ENCODE measurements at regions of chr1 and their contacts with region 1.

Region 1: GRCh38 chr1:167599957-167600581 is 30.0 kb upstream of the RCSD1 start:
- DNase-seq: peak; percentile 56
- ATAC-seq: peak; percentile 75 to 79
- H3K4me3 ChIP-seq: no peak overlapping the region
- H3K27ac ChIP-seq: no peak overlapping the region
- H3K4me1 ChIP-seq: peaks cover 31% of the 10 kb centered on the region
- H3K27me3 ChIP-seq: no peaks in the 10 kb centered on the region
- CTCF ChIP-seq: peak; percentile 57

Region 2: DNA sequence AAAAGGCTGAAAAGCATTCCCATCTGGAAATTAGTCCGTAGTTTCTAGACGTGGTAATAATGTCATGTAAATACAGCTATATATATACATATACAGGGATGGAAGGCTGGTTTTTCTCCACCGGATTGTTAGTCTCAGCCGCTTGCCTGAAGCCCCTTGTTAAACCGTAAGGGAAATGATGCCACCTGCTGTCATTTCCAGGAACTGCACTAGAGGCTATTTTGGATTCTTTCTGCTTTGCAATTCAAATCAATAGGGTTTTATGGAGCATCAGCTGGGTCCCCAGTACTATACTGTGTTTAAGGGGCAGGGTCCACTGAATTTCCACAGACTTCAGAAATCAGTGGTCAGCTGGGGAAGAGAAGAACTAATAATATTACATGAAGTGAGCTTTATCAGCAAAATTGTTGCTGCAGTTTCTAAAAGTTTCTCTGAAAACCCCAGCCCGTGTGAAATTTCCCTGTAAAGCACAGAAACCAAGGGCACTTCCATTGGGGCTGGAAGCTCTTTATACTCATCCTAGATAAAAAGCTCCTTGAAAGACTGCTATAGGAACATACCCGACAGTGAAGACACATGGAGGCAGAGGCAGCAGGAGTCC is 88.0 kb after region 1 on chr1:
- intact Hi-C with region 1: loop called (anchors 10 kb)
- DNase-seq: no peak
- ATAC-seq: peak; percentile 69 to 70
- H3K4me3 ChIP-seq: no peak overlapping the region
- H3K27ac ChIP-seq: no peak overlapping the region
- H3K4me1 ChIP-seq: peaks cover 23% of the 10 kb centered on the region
- H3K27me3 ChIP-seq: no peaks in the 10 kb centered on the region
- CTCF ChIP-seq: peak; percentile 93